ENCODE measurements at regions of chr11 and their contacts with region 1.

Region 1: DNA sequence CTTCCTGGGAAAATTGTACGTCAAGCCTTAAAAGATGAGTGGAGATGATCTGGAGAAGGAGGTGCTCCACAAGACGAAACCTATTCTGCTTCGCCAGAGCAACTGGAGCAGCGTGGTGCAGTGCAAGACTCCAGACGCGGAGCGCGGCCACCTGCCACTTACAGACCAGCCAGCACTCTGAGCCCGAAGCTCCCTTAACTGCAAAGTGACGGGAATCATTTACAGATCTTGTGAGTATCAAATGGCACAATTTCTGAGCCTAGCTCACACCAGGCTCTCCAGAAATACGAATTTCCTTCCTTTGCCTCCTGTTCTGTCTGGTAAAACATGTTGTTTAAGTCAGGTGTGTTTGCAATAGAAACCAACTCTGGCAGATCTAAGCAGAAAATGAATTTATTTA is 369.3 kb downstream of the CADM1 start:
- DNase-seq: no peak
- ATAC-seq: no peak
- H3K4me3 ChIP-seq: no peak overlapping the region
- H3K4me3 Mint-ChIP-seq: no peak overlapping the region
- H3K27ac ChIP-seq: no peak overlapping the region
- H3K27ac Mint-ChIP-seq: no peak overlapping the region
- H3K4me1 ChIP-seq: no peaks in the 10 kb centered on the region
- H3K4me1 Mint-ChIP-seq: no peaks in the 10 kb centered on the region
- H3K27me3 ChIP-seq: no peaks in the 10 kb centered on the region
- H3K27me3 Mint-ChIP-seq: peaks cover 3% of the 10 kb centered on the region
- CTCF ChIP-seq: no peak

Region 2: DNA sequence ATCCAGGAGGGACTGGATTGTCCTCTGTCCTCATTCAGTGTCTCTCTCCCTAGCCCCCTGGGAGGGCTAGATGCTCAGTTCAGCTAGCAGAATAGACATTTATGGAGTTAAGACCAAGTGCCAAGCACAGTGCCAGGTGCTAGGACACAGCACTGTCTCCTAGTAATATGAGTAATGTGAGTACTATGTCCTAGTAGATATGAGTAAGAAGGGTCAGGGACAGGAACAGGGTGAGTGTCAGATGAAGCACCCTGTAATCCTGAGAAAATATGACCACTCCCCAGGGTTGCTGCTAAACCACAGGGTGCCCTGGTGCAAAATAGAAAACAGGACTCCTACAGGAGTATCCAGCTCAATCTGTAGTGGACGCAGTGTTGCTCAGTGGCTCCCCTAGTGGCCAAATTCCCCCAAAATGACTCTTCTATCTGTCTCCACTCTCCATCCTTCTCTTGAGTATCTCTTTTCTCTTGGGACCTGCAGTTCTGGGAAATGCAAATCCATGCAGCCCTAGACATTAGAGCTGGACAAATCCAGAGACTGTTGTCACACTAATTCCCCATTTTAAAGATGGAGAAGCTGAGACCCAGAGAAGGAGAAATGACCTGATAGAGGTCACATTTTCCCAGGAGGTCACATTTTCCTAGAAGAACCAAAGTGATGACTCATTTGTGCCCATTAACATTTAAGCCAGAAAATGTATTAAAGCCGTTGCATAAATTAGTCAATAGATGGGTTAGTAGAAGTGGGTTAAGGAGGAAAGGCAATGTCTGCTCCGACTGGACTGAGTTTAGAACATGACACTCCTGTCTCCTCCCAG is 242.3 kb before region 1 on chr11:
- CTCF ChIA-PET with region 1: no interaction called
- POLR2A ChIA-PET with region 1: no interaction called
- intact Hi-C with region 1: no loop called
- DNase-seq: no peak
- ATAC-seq: no peak
- H3K4me3 ChIP-seq: no peak overlapping the region
- H3K4me3 Mint-ChIP-seq: no peak overlapping the region
- H3K27ac ChIP-seq: no peak overlapping the region
- H3K27ac Mint-ChIP-seq: no peak overlapping the region
- H3K4me1 ChIP-seq: no peaks in the 10 kb centered on the region
- H3K4me1 Mint-ChIP-seq: no peaks in the 10 kb centered on the region
- H3K27me3 ChIP-seq: no peaks in the 10 kb centered on the region
- H3K27me3 Mint-ChIP-seq: no peaks in the 10 kb centered on the region
- CTCF ChIP-seq: peak; percentile 40

Region 3: GRCh38 chr11:115180272-115180671 is 45.3 kb after region 1 on chr11:
- CTCF ChIA-PET with region 1: no interaction called
- POLR2A ChIA-PET with region 1: no interaction called
- intact Hi-C with region 1: no loop called
- DNase-seq: no peak
- ATAC-seq: no peak
- H3K4me3 ChIP-seq: no peak overlapping the region
- H3K4me3 Mint-ChIP-seq: no peak overlapping the region
- H3K27ac ChIP-seq: no peak overlapping the region
- H3K27ac Mint-ChIP-seq: no peak overlapping the region
- H3K4me1 ChIP-seq: no peaks in the 10 kb centered on the region
- H3K4me1 Mint-ChIP-seq: no peaks in the 10 kb centered on the region
- H3K27me3 ChIP-seq: no peaks in the 10 kb centered on the region
- H3K27me3 Mint-ChIP-seq: no peaks in the 10 kb centered on the region
- CTCF ChIP-seq: no peak

Region 4: DNA sequence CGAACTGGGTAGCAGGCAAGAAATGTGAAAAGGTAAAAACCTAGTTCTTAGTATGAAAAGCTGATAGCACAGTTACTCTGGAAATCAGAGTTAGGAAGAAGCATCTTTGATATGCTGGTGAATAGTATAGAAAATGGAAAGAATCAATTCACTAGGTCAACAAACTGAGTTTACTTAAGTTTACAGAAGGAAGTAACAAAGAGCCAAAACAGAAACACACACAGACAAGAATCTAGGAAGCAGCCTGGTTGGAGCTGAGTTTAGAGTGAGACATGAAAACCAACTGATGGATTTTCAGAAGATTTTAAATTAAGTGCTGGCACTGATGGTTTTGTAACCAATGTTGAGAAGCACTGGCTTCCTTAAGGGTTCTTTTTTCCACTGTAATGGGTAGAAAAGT is 73.0 kb after region 1 on chr11:
- CTCF ChIA-PET with region 1: no interaction called
- POLR2A ChIA-PET with region 1: interaction called, 12 read pairs
- intact Hi-C with region 1: no loop called
- DNase-seq: no peak
- ATAC-seq: no peak
- H3K4me3 ChIP-seq: no peak overlapping the region
- H3K4me3 Mint-ChIP-seq: no peak overlapping the region
- H3K27ac ChIP-seq: no peak overlapping the region
- H3K27ac Mint-ChIP-seq: no peak overlapping the region
- H3K4me1 ChIP-seq: no peaks in the 10 kb centered on the region
- H3K4me1 Mint-ChIP-seq: no peaks in the 10 kb centered on the region
- H3K27me3 ChIP-seq: no peaks in the 10 kb centered on the region
- H3K27me3 Mint-ChIP-seq: peaks cover 4% of the 10 kb centered on the region
- CTCF ChIP-seq: no peak

Region 5: DNA sequence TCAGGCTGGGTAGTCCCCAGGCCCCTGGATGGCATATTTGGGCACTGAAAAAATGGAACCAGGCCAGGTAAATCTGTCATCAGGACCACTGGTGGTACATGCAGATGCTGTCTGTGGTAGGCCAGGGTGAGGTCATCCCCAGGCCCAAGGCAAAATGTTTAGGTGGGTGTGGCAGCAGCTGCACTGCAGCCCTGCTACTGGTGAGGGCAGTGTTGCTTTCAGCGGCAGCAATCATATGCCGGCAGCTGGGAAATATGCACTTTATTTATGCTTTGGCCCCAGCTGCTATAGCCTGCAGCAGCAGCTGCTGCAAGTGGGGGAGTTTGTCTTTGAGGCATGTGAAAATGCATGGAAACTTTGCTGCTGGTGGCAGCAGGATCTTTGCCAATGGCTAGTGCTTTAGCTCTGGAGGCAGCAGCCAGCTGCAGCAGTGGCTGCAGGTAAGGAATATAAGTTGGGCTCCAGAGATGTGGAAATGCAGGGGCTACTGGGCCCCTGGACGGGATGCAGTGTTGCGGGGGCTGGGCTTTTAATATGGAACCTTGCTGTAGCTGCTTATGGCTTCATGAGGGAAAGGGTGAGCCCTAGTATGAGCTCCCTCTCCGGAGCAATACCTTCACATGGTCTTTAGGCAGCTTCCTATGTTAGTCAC is 735.0 kb after region 1 on chr11:
- CTCF ChIA-PET with region 1: no interaction called
- POLR2A ChIA-PET with region 1: no interaction called
- intact Hi-C with region 1: no loop called
- DNase-seq: no peak
- ATAC-seq: no peak
- H3K4me3 ChIP-seq: no peak overlapping the region
- H3K4me3 Mint-ChIP-seq: no peak overlapping the region
- H3K27ac ChIP-seq: no peak overlapping the region
- H3K27ac Mint-ChIP-seq: no peak overlapping the region
- H3K4me1 ChIP-seq: peaks cover 0 to 17% of the 10 kb centered on the region in 2 donors
- H3K4me1 Mint-ChIP-seq: peaks cover 21% of the 10 kb centered on the region
- H3K27me3 ChIP-seq: peaks cover 0 to 4% (median 0%) of the 10 kb centered on the region in 4 experiments
- H3K27me3 Mint-ChIP-seq: peaks cover 11% of the 10 kb centered on the region
- CTCF ChIP-seq: no peak

Measured in B cell (primary cell).